ENCODE measurements at regions of chr6 and their contacts with region 1.

Region 1: GRCh38 chr6:21593412-21593926 is at the start of gene SOX4:
- DNase-seq: peak; percentile 88
- H3K4me3 ChIP-seq: peak within 1 kb of the TSS; percentile 91
- CTCF ChIP-seq: no peak

Region 2: GRCh38 chr6:20564269-20564668 is 1029.2 kb before region 1 on chr6:
- CTCF ChIA-PET with region 1: interaction called, 128 read pairs
- POLR2A ChIA-PET with region 1: interaction called, 6 read pairs
- DNase-seq: no peak
- H3K4me3 ChIP-seq: no peak overlapping the region
- CTCF ChIP-seq: no peak

Region 3: DNA sequence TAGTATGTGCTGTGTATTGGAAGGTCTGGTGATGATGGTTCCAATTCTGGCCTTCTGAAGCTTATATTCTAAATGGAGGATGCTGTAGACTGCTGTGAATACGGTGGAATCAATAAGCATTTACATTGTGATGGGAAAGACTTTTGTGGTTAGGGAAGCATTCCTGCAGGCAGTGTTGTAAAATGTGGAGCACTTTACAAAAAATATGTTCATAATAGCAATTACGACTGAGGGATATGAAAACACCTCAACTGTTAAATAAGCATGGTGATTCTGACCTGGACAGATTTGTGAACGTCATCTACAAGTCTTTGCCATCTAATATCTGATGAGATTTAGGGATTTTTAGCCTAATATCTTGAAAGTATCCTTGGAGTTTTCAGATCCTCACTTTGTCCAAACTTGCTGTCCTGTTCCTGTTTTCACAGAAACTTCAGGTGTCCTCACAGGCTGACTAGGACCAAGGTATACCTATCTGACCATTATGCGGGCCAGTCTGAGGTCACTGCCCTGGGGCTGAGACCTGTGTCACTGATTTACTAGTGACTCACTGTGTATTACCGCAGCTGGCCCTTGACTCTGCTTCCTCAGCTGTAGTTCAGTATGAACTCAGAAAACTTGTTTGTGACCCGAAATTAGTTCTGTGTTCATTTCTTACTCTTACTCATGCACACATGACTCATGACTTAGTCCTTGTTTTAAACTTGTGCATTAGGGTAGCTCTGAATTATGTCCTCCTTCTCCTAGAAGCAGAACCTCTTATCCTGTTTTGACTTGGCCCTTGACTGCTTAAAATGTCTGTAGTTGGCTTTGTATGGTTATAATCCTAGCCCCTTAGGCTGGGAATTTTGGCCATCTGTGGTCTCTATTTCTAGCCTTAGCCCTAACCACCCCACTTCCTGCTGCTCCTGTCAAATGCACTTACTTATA is 716.2 kb before region 1 on chr6:
- CTCF ChIA-PET with region 1: interaction called, 45 read pairs
- POLR2A ChIA-PET with region 1: interaction called, 9 read pairs
- DNase-seq: peak; percentile 79
- H3K4me3 ChIP-seq: no peak overlapping the region
- CTCF ChIP-seq: no peak

Region 4: GRCh38 chr6:21935561-21936028 is 342.1 kb after region 1 on chr6:
- CTCF ChIA-PET with region 1: interaction called, 10 read pairs
- POLR2A ChIA-PET with region 1: no interaction called
- DNase-seq: no peak
- H3K4me3 ChIP-seq: no peak overlapping the region
- CTCF ChIP-seq: peak; percentile 45

Region 5: GRCh38 chr6:21946298-21946783 is 352.9 kb after region 1 on chr6:
- CTCF ChIA-PET with region 1: interaction called, 3 read pairs
- POLR2A ChIA-PET with region 1: interaction called, 23 read pairs
- DNase-seq: peak; percentile 99
- H3K4me3 ChIP-seq: no peak overlapping the region
- CTCF ChIP-seq: no peak

Measured in AG04449 (cell line).